Stomach (tissue), 19 donors: ENCODE measurements at regions of chr16 and their contacts with region 1.

Region 1: DNA sequence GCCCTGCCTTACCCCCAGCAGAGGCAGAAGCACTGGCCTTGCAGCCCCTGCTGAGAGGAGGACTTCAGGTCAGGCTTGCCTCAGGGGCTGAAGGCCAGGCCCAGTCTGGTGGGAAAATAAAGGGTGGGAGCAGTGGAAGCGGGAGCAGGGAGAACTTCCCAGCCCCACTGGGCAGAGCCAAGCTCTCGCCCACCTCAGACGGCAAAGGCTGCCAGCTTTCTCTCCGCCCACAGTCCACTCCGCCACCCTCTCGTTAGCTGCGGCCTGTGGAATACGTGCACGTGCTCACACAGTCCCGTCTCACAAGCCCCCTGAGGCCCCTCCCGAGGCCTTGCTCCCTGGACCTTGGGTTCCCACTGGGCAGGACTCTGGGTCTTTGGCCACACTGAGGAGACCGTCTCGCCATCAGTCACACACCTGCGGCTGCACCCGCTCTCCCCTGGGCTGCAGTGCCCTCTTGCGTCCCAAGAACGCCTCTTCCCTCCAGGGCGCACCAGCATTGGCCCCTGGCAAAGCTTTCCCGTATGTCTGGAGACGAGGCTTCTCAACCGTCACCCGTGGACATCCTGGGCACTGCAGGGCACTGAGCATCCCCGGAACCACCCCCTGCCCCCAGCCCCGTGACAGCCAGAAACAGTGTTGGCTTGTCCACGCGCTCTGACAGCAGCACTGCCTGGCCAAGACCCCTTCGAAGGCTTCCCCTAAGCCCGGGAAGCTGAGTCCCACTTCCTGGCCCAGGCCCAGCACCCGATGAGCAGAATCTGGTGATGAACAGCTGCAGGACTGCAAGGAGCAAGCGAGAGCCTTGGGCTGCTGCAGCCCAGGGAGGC is 8.3 kb downstream of the MRPL28 start:
- DNase-seq: peak; percentile 84 to 90
- H3K4me3 ChIP-seq: no peak overlapping the region
- H3K27ac ChIP-seq: no peak overlapping the region
- H3K4me1 ChIP-seq: peaks cover 0 to 16% (median 15%) of the 10 kb centered on the region in 4 donors
- H3K27me3 ChIP-seq: peaks cover 0 to 21% (median 0%) of the 10 kb centered on the region in 3 donors
- CTCF ChIP-seq: peak in 5 of 7 experiments; percentile 59 to 72 (median 68)
- EP300 ChIP-seq: no peak
- POLR2A ChIP-seq: no peak

Region 2: GRCh38 chr16:234468-235305 is 127.4 kb before region 1 on chr16 and contains the start of gene FAM234A:
- intact Hi-C with region 1: loop called (anchors 10 kb)
- DNase-seq: peak; percentile 96 to 98
- H3K4me3 ChIP-seq: peak within 1 kb of the TSS; percentile 76 to 84 (median 80)
- H3K27ac ChIP-seq: peak within 1 kb of the TSS; percentile 97 to 100 (median 99)
- H3K4me1 ChIP-seq: peaks cover 12 to 23% (median 20%) of the 10 kb centered on the region in 4 donors
- H3K27me3 ChIP-seq: no peaks in the 10 kb centered on the region
- CTCF ChIP-seq: peak in 4 of 7 experiments; percentile 18 to 27 (median 25)
- EP300 ChIP-seq: no peak
- POLR2A ChIP-seq: peak in 2 of 4 donors; percentile 27 to 51
- total RNA-seq, gene FAM234A: 14.6 to 87.2 (median 60.3) TPM